ENCODE measurements at regions of chr15 and their contacts with region 1.

Region 1: GRCh38 chr15:40069178-40070165 is 30.5 kb upstream of the SRP14 start:
- DNase-seq: peak; percentile 72 to 97 (median 96)
- H3K4me3 ChIP-seq: peak overlapping the region in 2 of 59 donors; percentile 4 to 16
- H3K27ac ChIP-seq: peak overlapping the region in 56 of 59 donors; percentile 2 to 84 (median 72)
- H3K27me3 ChIP-seq: peaks cover 0 to 3% (median 0%) of the 10 kb centered on the region in 45 donors
- CTCF ChIP-seq: peak in 23 of 56 donors; percentile 8 to 55 (median 27)

Region 2: DNA sequence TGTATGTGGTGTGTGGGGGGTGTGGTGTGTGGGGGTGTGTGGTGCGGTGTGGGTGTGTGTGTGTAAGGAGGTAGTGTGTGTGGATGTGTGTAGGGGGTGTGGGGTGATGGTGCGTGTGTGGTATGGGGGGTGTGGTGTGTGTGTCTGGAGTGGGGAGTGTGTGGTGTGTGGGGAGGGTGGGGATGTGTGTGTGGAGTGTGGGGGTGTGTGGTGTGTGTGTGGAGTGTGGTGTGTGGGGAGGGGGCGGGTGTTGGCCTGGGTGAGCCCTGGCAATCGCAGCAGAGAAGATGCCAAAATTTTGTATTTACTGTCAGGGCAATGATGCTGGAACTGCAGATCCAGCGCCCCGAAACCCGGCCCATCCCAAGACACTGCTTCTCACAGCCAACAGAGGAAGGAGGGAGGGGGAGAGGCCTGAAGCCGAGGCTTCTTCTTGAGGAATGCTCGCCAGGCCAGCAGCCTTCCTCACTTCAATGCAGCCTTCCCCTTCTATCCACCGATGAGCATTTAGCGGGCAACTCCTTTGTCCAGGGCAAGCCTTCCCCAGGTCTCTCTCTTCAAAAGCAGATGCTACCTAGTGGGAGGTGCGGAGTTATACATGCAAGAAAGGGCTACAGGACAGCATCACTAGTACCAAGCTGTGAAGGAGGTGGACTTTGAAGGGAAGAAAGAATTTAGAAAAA is 18.5 kb before region 1 on chr15:
- intact Hi-C with region 1: loop called in 1 of 2 experiments (anchors 2 kb)
- DNase-seq: peak in 1 of 10 donors; percentile 8
- H3K4me3 ChIP-seq: no peak overlapping the region
- H3K27ac ChIP-seq: no peak overlapping the region
- H3K27me3 ChIP-seq: no peaks in the 10 kb centered on the region
- CTCF ChIP-seq: no peak

Measured in dorsolateral prefrontal cortex (tissue), 120 donors.